ENCODE measurements at regions of chr20 and their contacts with region 1.

Region 1: DNA sequence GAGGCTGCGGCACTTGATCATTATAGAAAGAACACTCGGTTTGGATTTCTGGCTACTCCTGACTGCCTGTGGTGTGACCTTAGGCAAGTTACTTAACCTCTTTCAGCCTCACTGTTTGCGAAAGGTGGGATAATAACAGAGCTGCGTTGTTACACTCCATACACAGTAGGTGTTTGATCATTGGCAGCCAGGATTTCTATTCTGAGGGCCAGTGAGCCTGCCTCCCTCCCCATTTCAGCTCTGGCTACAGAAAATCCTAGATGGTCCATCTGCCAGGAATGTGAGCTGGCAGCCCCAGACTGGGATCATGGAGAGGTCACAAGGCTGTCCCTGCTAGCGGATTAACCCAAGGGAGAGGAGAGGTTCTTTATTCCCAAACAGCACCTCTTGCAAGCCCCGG is 2.7 kb downstream of the KCNB1 start:
- DNase-seq: no peak

Region 2: GRCh38 chr20:49100972-49101371 is 378.8 kb before region 1 on chr20:
- intact Hi-C with region 1: no loop called
- DNase-seq: no peak

Region 3: GRCh38 chr20:49427751-49428518 is 51.9 kb before region 1 on chr20:
- intact Hi-C with region 1: loop called (anchors 2 kb)
- DNase-seq: peak in 11 of 42 donors; percentile 11 to 56 (median 32)

Measured in head of caudate nucleus (tissue), 42 donors.